ENCODE measurements at regions of chr12 and their contacts with region 1.

Region 1: DNA sequence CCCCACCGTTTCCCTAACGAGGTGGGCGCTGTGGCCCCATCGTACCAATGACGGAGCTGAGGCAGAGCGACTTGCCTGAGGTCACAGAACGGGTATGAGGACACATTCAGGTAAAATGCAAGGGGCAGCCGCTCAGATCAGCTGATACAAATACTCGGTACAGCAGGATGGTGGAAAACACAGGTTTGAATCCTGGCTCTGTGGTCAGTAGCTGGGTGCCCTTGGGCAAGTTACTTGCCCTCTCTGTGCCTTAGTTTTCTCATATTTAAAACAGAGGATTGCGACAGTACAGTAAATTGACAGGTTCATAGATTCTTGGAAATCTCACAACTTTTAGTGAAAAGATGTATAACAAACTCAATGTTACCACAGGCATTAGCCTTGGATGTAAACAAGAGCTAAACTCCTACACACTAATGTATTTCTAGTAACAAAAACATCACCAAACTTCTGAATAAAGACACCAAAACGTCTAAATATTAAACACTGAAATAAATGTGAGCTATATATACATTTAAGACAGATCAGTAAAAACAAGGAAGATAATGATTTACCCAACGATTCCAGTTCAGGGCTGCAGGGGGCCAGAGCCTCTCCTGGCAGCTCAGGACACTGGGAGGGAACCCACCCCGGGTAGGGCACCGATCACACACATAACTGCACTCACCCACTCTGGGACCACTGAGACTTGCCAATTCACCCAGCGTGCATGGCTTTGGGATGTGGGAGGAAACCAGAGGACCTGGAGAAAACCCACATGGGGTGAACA is 128.4 kb downstream of the RBM19 start:
- DNase-seq: no peak
- H3K4me3 ChIP-seq: no peak overlapping the region
- H3K27ac ChIP-seq: no peak overlapping the region
- H3K4me1 ChIP-seq: peaks cover 0 to 5% (median 0%) of the 10 kb centered on the region in 4 experiments; a peak in 1 of 7 replicates
- H3K27me3 ChIP-seq: no peaks in the 10 kb centered on the region
- CTCF ChIP-seq: peak in 1 of 3 experiments; percentile 9; a peak in 1 of 4 replicates
- EP300 ChIP-seq: no peak
- POLR2A ChIP-seq: no peak
- RAD21 ChIP-seq: no peak; a peak in 1 of 4 replicates

Region 2: GRCh38 chr12:113678223-113679119 is 159.2 kb before region 1 on chr12:
- CTCF ChIA-PET with region 1: no interaction called
- POLR2A ChIA-PET with region 1: no interaction called
- DNase-seq: no peak
- H3K4me3 ChIP-seq: no peak overlapping the region
- H3K27ac ChIP-seq: no peak overlapping the region
- H3K4me1 ChIP-seq: no peaks in the 10 kb centered on the region
- H3K27me3 ChIP-seq: no peaks in the 10 kb centered on the region
- CTCF ChIP-seq: no peak
- EP300 ChIP-seq: no peak
- POLR2A ChIP-seq: no peak
- RAD21 ChIP-seq: no peak

Region 3: GRCh38 chr12:113826805-113827538 is 10.7 kb before region 1 on chr12:
- CTCF ChIA-PET with region 1: interaction called, 12 read pairs
- POLR2A ChIA-PET with region 1: no interaction called
- DNase-seq: no peak
- H3K4me3 ChIP-seq: no peak overlapping the region
- H3K27ac ChIP-seq: no peak overlapping the region
- H3K4me1 ChIP-seq: no peaks in the 10 kb centered on the region; a peak in 1 of 7 replicates
- H3K27me3 ChIP-seq: no peaks in the 10 kb centered on the region
- CTCF ChIP-seq: peak; percentile 37 to 54 (median 47); a peak in 3 of 4 replicates
- EP300 ChIP-seq: no peak
- POLR2A ChIP-seq: no peak
- RAD21 ChIP-seq: peak; percentile 38 to 45; a peak in 3 of 4 replicates